Activated naive CD4-positive, alpha-beta T cell treated with anti-CD3 and anti-CD28 coated beads for 36 hours (primary cell): ENCODE measurements at regions of chr6 and their contacts with region 1.

Region 1: DNA sequence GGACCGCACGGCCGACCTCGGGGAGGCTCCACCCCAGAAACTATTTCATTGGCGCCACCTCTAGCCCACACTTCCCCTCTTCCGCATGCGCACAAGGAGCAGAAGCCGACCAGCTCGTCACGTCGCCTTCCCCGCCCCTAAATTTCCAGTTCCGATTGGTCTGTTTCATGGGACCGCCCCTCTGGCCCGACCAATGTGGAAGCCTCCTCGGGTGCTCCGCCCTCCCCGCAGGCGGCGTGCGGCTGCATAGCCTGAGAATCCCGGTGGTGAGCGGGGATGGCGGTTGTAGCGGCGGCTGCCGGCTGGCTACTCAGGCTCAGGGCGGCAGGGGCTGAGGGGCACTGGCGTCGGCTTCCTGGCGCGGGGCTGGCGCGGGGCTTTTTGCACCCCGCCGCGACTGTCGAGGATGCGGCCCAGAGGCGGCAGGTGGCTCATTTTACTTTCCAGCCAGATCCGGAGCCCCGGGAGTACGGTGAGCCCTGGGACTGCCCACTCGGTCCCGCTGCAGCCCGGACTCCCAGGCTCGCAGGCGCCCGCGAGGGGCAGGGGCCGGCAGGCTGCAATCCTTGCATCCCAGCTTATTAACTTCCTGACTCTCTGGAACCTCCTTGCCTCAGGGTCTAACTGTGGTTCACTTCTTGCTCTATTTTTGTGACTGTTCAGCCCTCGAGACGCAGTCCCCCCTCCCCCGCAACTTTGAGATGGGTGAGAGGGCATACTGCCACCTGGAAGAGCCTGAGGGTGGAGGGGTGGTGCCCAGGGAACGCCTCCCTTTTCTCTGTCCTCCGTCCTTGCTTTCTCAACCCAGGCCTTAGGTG is at the start of gene BCKDHB:
- DNase-seq: peak; percentile 99
- H3K4me3 Mint-ChIP-seq: peak within 1 kb of the TSS; percentile 90
- H3K27ac Mint-ChIP-seq: peak within 1 kb of the TSS; percentile 84
- H3K4me1 Mint-ChIP-seq: peaks cover 10% of the 10 kb centered on the region
- H3K27me3 Mint-ChIP-seq: no peaks in the 10 kb centered on the region
- total RNA-seq, gene BCKDHB: 15.5 to 18.5 TPM

Region 2: DNA sequence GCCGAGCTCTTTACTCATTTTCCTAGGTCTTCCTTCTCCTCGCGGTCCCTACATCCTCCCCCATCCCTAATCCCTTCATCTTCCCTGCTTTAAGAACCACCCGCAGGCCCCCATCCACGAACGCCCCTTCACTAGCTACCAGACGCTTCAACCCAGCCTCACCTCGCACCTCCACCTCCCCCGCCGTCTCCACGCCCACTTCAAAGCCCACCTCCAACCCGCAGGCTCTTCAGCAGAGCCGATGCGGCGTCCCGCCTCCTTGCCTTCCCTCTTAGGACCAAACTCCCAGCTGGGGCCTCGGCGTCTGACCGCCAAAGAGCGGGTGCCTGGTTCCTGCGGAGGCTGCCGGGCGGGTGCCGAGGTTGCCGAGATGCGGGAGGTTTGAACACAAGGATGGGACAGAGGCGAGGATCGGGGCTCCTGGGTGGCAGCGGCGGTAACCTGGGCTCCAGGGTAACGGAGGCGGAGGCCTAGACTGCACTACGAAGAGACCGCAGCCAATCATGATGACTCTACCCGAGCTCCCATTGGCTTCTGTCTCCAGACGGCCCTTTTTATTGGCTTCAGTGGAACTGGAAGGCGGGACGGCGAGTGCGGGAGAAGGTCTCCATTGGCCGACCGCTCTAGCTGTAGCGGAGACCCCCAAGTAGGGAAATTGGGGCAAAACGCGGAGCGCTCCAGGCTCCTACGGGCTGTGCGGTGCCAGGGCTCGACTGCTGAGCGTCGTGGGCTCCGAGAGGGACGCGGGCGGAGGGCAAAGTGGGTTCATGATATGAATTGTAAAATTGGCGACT is 569.5 kb before region 1 on chr6 and contains the start of gene LCA5:
- CTCF ChIA-PET with region 1: no interaction called
- intact Hi-C with region 1: loop called (anchors 1 kb)
- DNase-seq: peak; percentile 90
- H3K4me3 Mint-ChIP-seq: no peak within 1 kb of the TSS
- H3K27ac Mint-ChIP-seq: no peak within 1 kb of the TSS
- H3K4me1 Mint-ChIP-seq: no peaks in the 10 kb centered on the region
- H3K27me3 Mint-ChIP-seq: peaks cover 8% of the 10 kb centered on the region
- total RNA-seq, gene LCA5: 0.22 to 0.29 TPM

Region 3: DNA sequence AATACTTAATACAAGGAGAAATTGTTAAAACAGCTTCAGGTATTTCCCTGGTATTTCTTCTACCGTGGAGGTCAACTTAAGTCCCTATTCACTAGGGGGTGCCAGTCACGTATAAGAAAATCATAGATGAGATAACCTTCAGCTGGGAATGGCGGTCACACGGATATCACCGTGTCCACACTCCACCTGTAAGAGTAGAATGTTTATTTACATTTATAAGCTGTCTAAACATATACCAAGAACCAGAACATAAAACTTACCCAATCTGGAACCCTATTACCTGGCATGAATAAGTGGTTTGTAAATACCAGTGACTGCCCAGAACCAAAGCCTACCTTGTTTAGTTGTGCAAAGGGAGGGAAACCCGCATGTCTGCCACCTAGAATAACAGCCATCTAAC is 157.4 kb before region 1 on chr6:
- CTCF ChIA-PET with region 1: interaction called, 6 read pairs
- intact Hi-C with region 1: loop called (anchors 1 kb)
- DNase-seq: peak; percentile 83
- H3K4me3 Mint-ChIP-seq: no peak overlapping the region
- H3K27ac Mint-ChIP-seq: no peak overlapping the region
- H3K4me1 Mint-ChIP-seq: peaks cover 14% of the 10 kb centered on the region
- H3K27me3 Mint-ChIP-seq: peaks cover 34% of the 10 kb centered on the region

Region 4: GRCh38 chr6:80004173-80005072 is 102.2 kb before region 1 on chr6 and contains the start of gene TTK:
- CTCF ChIA-PET with region 1: no interaction called
- intact Hi-C with region 1: loop called (anchors 1 kb)
- DNase-seq: peak; percentile 93
- H3K4me3 Mint-ChIP-seq: peak within 1 kb of the TSS; percentile 95
- H3K27ac Mint-ChIP-seq: peak within 1 kb of the TSS; percentile 89
- H3K4me1 Mint-ChIP-seq: peaks cover 16% of the 10 kb centered on the region
- H3K27me3 Mint-ChIP-seq: peaks cover 1% of the 10 kb centered on the region
- total RNA-seq, gene TTK: 45.9 to 51.1 TPM